Endothelial cell of umbilical vein (primary cell): ENCODE measurements at regions of chr1 and their contacts with region 1.

Region 1: GRCh38 chr1:153352523-153352922 is 3.9 kb upstream of the PGLYRP4 start:
- DNase-seq: peak; percentile 54
- H3K4me3 ChIP-seq: no peak overlapping the region
- H3K27ac ChIP-seq: no peak overlapping the region
- H3K4me1 ChIP-seq: no peaks in the 10 kb centered on the region
- H3K27me3 ChIP-seq: no peaks in the 10 kb centered on the region
- CTCF ChIP-seq: peak; percentile 85 to 86
- POLR2A ChIP-seq: no peak

Region 2: DNA sequence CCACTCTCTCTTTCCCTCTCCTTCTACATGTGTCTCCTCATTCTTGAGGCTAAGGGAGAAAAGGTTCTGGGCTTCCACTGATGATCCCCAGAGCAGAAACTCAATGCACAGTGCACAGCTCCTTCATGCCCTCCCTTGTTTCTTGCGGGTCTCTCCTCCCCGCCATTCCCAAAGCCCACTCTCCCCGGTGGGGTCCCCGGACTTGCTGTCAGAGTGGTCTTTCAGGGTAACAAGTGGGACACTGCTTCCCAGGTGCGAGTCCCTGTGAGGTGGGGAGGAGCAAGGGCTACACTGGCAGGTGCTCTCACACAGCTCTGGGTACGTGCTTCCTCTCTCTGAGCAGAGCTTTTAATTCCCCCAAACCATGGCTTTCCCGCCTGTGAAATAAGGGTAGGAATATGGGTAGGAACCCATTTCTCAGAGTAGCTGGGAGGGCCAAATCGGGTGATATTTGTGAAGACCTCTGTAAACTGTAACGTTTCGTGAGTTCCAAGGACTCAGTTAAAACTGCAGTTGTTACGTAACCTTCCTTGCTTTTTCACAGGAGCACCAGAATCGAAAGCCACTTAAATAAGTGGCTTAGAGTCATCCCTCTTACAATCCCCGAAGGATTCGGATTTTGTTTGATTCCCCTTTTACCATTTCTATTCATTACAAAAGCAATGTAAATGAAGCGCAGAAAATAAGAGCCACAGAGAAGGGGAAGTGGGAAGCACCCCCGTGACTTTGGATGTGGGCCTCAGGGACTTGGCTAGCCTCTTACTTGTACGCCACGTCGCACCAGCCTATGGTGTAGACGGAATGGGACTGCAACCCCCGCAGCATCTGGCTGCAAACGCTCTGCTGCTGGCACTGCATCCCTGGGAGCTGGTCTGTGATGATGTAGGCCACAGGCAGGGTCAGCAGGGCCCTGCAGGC is 46.0 kb before region 1 on chr1:
- CTCF ChIA-PET with region 1: no interaction called
- POLR2A ChIA-PET with region 1: no interaction called
- dilution Hi-C with region 1: no loop called
- intact Hi-C with region 1: no loop called
- DNase-seq: no peak
- H3K4me3 ChIP-seq: no peak overlapping the region
- H3K27ac ChIP-seq: no peak overlapping the region
- H3K4me1 ChIP-seq: no peaks in the 10 kb centered on the region
- H3K27me3 ChIP-seq: no peaks in the 10 kb centered on the region
- CTCF ChIP-seq: no peak
- POLR2A ChIP-seq: no peak

Region 3: GRCh38 chr1:153404768-153405167 is 52.2 kb after region 1 on chr1:
- CTCF ChIA-PET with region 1: interaction called, 5 read pairs
- POLR2A ChIA-PET with region 1: no interaction called
- dilution Hi-C with region 1: no loop called
- intact Hi-C with region 1: loop called (anchors 2 kb)
- DNase-seq: no peak
- H3K4me3 ChIP-seq: no peak overlapping the region
- H3K27ac ChIP-seq: no peak overlapping the region
- H3K4me1 ChIP-seq: no peaks in the 10 kb centered on the region
- H3K27me3 ChIP-seq: peaks cover 0 to 2% of the 10 kb centered on the region in 2 experiments
- CTCF ChIP-seq: peak; percentile 43 to 50
- POLR2A ChIP-seq: no peak

Region 4: DNA sequence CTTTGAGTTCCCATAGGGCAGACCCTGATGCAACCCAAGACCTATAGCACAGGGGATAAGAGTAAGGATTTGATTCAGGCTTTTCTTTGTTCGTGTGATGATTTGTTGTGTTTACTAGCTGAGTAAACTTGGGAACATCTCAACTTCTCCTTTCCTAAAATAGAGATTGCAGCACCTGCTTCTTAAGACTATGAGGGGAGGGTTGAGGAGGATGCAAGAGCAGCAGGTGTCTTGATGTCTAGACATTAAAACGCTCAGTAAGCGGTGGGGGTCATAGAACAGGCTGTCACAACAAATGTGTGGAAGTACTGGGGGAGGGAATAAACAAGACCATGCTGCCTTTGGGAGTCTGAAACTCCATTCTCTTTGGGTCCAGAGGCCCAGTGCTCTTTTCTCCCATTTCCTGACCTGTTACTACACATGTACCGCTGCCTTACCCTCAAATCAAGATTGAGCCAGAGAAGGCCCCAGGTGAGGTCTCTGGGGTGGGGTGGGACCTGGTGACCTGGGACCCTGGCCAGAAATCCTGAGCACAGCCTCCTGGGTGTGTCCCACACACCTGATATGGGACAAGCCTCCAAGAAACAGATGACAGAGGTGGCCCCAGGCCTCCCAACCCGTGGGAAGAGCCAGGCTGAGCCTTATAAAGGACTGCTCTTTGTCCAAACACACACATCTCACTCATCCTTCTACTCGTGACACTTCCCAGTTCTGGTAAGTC is 63.5 kb after region 1 on chr1 and contains the start of gene S100A7A:
- CTCF ChIA-PET with region 1: no interaction called
- POLR2A ChIA-PET with region 1: no interaction called
- dilution Hi-C with region 1: no loop called
- intact Hi-C with region 1: no loop called
- DNase-seq: no peak
- H3K4me3 ChIP-seq: no peak within 1 kb of the TSS
- H3K27ac ChIP-seq: no peak within 1 kb of the TSS
- H3K4me1 ChIP-seq: no peaks in the 10 kb centered on the region
- H3K27me3 ChIP-seq: no peaks in the 10 kb centered on the region
- CTCF ChIP-seq: no peak
- POLR2A ChIP-seq: no peak
- total RNA-seq, gene S100A7A: not detected in 2 replicates

Region 5: DNA sequence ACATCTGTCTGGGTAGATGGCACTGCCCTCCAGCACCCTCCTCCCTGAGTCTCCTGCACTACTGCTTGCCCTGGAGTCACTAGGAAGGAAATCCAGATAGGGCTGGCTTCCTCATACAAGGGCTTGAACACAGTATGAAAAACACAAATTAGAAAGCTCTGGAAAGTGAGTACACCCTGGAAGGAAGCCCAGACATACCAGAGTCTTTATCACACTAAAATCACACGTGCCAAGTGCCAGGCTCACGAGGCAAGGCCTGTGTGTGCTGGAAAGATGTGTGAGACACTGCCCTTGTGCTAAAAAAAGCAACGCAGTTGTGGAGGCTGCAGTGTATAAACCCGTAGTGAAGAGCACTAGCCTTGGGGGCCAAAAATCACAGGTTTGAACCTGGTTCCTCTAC is 136.2 kb after region 1 on chr1:
- CTCF ChIA-PET with region 1: interaction called, 331 read pairs
- POLR2A ChIA-PET with region 1: no interaction called
- dilution Hi-C with region 1: no loop called
- intact Hi-C with region 1: no loop called
- DNase-seq: no peak
- H3K4me3 ChIP-seq: no peak overlapping the region
- H3K27ac ChIP-seq: no peak overlapping the region
- H3K4me1 ChIP-seq: no peaks in the 10 kb centered on the region
- H3K27me3 ChIP-seq: peaks cover 7 to 8% of the 10 kb centered on the region in 2 experiments
- CTCF ChIP-seq: no peak
- POLR2A ChIP-seq: no peak

Region 6: DNA sequence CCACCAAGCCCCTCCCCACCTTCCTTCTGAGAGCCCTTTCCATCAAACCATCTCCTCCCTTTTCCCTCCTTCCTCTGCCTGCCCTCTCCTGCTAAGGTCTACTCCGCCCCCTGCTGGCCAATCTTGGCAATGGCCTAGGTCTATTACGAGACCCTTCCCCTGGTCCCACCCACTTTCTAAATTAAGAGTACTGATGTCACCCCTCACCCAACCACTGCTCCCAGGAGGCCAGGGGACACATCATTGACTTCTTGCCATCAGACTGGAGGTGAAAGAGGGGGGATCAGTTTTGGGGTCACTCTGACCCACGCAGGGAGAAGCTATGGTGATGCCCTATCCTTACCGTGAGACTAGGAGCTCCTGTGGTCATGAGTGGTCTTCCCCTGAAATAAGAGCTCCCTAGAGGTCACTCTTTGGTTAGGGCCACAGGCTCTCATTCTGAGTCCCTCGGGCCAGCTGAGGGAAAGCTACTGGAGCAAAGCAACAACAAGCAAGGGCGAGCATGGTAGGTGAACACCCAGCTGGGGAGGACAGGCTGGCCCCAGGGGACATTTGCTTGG is 142.5 kb after region 1 on chr1:
- CTCF ChIA-PET with region 1: interaction called, 331 read pairs
- POLR2A ChIA-PET with region 1: no interaction called
- dilution Hi-C with region 1: no loop called
- intact Hi-C with region 1: loop called (anchors 1 kb)
- DNase-seq: peak; percentile 60
- H3K4me3 ChIP-seq: no peak overlapping the region
- H3K27ac ChIP-seq: no peak overlapping the region
- H3K4me1 ChIP-seq: no peaks in the 10 kb centered on the region
- H3K27me3 ChIP-seq: peaks cover 7 to 16% of the 10 kb centered on the region in 2 experiments
- CTCF ChIP-seq: peak; percentile 80 to 88
- POLR2A ChIP-seq: no peak